HEK293T (cell line): ENCODE measurements at regions of chr18 and their contacts with region 1.

Region 1: DNA sequence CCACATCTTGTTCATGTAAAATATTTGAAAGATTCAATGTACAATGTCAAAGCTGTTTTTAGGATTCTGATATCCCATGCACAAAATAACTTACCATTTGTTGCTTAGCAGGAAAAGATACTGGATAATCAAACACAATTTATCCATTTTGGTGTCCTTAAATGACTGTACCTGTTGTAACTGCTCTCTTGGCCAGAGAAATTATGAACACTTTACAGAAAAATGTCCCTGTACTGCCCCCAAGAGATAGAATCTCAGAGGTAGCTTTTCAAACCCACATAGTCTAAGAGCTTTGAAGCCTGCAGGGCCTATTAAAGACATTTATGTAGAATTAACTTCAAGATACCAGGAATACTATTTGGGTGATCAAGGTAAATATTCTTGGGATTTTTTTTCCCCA is 12.2 kb upstream of the ME2 start:
- DNase-seq: no peak

Region 2: GRCh38 chr18:50312296-50313030 is 554.3 kb before region 1 on chr18:
- CTCF ChIA-PET with region 1: no interaction called
- POLR2A ChIA-PET with region 1: no interaction called
- DNase-seq: no peak

Region 3: GRCh38 chr18:50819728-50820378 is 46.9 kb before region 1 on chr18 and contains the start of gene MRO:
- CTCF ChIA-PET with region 1: interaction called, 12 read pairs
- POLR2A ChIA-PET with region 1: no interaction called
- DNase-seq: peak; percentile 76

Region 4: GRCh38 chr18:50878345-50879301 is 11.9 kb after region 1 on chr18 and contains the start of gene ME2:
- CTCF ChIA-PET with region 1: no interaction called
- POLR2A ChIA-PET with region 1: interaction called, 16 read pairs
- DNase-seq: peak; percentile 89

Region 5: GRCh38 chr18:51168026-51168742 is 301.4 kb after region 1 on chr18:
- CTCF ChIA-PET with region 1: no interaction called
- POLR2A ChIA-PET with region 1: no interaction called
- DNase-seq: no peak